CD4-positive, alpha-beta memory T cell (primary cell): ENCODE measurements at regions of chr3 and their contacts with region 1.

Region 1: GRCh38 chr3:179322286-179323196 is at the start of gene ZNF639:
- DNase-seq: peak; percentile 83 to 88 (median 87)
- H3K4me3 ChIP-seq: peak within 1 kb of the TSS; percentile 70 to 83
- H3K4me3 Mint-ChIP-seq: peak within 1 kb of the TSS; percentile 90 to 96 (median 92)
- H3K27ac ChIP-seq: peak within 1 kb of the TSS; percentile 98
- H3K27ac Mint-ChIP-seq: peak within 1 kb of the TSS; percentile 87 to 97 (median 97)
- H3K4me1 ChIP-seq: peaks cover 32% of the 10 kb centered on the region
- H3K4me1 Mint-ChIP-seq: peaks cover 25 to 39% (median 31%) of the 10 kb centered on the region in 4 donors
- H3K27me3 ChIP-seq: no peaks in the 10 kb centered on the region
- H3K27me3 Mint-ChIP-seq: no peaks in the 10 kb centered on the region
- total RNA-seq, gene ZNF639: 43.2 to 45.6 TPM

Region 2: DNA sequence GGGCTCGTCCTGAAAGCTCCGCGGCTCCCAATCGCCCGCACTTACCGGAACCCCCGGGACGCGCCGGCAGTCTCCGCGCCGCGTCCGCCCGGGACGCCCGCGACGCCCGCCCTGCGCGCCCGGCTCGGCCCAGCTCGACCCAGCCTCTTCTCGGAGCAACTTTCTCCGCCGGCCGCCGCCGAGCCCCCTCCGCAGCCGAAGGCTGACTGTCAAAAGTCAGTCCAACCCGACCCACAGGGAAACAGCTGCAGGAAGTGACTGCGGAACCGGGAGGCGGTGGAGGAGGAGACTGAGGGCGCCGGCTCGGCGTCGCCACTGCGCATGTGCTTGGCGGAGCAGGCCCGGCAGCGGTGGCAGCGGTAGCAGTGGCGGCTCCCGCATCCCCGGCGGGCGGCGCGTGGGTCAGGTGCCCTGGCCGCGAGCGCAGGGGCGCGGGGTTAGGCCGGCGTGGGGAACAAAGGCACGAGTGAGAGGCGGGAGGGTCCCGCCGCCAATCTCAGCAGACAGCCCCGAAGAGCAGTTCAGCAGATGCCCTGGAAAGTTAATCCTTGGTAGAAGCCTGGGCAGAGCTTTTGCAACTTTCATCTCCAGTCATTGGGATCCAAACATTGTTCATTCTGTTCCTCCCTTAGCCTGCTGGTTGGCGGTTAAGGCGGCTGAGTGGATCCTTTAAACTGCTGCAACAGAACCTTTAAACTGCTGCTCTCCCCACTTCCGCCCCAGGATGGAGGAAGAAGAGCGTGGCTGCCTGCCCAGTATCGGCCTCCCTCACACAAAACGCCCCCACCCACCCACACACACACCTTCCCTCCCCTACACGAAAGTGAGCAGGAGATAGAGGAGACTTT is 250.8 kb before region 1 on chr3 and contains the start of gene ZMAT3:
- CTCF ChIA-PET with region 1: interaction called, 16 read pairs
- POLR2A ChIA-PET with region 1: interaction called, 20 read pairs
- intact Hi-C with region 1: no loop called
- DNase-seq: peak; percentile 84 to 91 (median 86)
- H3K4me3 ChIP-seq: peak within 1 kb of the TSS; percentile 79 to 81
- H3K4me3 Mint-ChIP-seq: peak within 1 kb of the TSS; percentile 94 to 98 (median 97)
- H3K27ac ChIP-seq: peak within 1 kb of the TSS; percentile 77
- H3K27ac Mint-ChIP-seq: peak within 1 kb of the TSS; percentile 93 to 98 (median 95)
- H3K4me1 ChIP-seq: peaks cover 53% of the 10 kb centered on the region
- H3K4me1 Mint-ChIP-seq: peaks cover 41 to 67% (median 56%) of the 10 kb centered on the region in 4 donors
- H3K27me3 ChIP-seq: no peaks in the 10 kb centered on the region
- H3K27me3 Mint-ChIP-seq: no peaks in the 10 kb centered on the region
- total RNA-seq, gene ZMAT3: 18.5 to 20.0 TPM

Region 3: GRCh38 chr3:179108086-179108485 is 214.5 kb before region 1 on chr3:
- CTCF ChIA-PET with region 1: interaction called, 43 read pairs
- POLR2A ChIA-PET with region 1: no interaction called
- intact Hi-C with region 1: no loop called
- DNase-seq: no peak
- H3K4me3 ChIP-seq: no peak overlapping the region
- H3K4me3 Mint-ChIP-seq: no peak overlapping the region
- H3K27ac ChIP-seq: no peak overlapping the region
- H3K27ac Mint-ChIP-seq: no peak overlapping the region
- H3K4me1 ChIP-seq: no peaks in the 10 kb centered on the region
- H3K4me1 Mint-ChIP-seq: peaks cover 0 to 2% (median 1%) of the 10 kb centered on the region in 4 donors
- H3K27me3 ChIP-seq: peaks cover 4% of the 10 kb centered on the region
- H3K27me3 Mint-ChIP-seq: peaks cover 4 to 7% of the 10 kb centered on the region in 2 donors

Region 4: DNA sequence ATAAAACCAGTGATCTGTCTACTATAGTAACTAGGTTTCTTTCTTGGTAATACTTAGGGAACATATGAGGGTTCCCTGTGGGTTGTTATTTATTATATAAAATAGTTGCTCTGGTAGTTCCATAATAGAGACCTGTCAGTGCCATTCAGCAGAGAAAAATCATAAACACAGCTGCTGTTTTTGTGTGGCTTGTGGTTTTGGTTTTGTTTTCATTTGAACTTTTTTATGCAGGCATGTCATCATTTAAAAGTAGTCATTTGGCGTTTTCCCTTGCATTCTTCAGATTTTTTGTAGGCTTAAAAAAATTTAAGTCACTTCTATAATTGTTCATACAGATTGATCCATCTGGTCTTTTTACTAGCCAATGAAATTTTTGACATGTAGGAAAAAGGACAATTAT is 126.4 kb before region 1 on chr3:
- CTCF ChIA-PET with region 1: interaction called, 3 read pairs
- POLR2A ChIA-PET with region 1: no interaction called
- intact Hi-C with region 1: loop called (anchors 5 kb)
- DNase-seq: peak; percentile 48 to 69 (median 57)
- H3K4me3 ChIP-seq: no peak overlapping the region
- H3K4me3 Mint-ChIP-seq: peak overlapping the region in 5 of 8 donors; percentile 17 to 73 (median 59)
- H3K27ac ChIP-seq: no peak overlapping the region
- H3K27ac Mint-ChIP-seq: peak overlapping the region in 5 of 7 donors; percentile 37 to 70 (median 56)
- H3K4me1 ChIP-seq: peaks cover 29% of the 10 kb centered on the region
- H3K4me1 Mint-ChIP-seq: peaks cover 39 to 62% (median 52%) of the 10 kb centered on the region in 4 donors
- H3K27me3 ChIP-seq: no peaks in the 10 kb centered on the region
- H3K27me3 Mint-ChIP-seq: no peaks in the 10 kb centered on the region

Region 5: GRCh38 chr3:179347345-179348194 is 25.0 kb after region 1 on chr3 and contains the start of gene MFN1:
- CTCF ChIA-PET with region 1: interaction called, 10 read pairs
- POLR2A ChIA-PET with region 1: interaction called, 33 read pairs
- intact Hi-C with region 1: loop called (anchors 1 kb)
- DNase-seq: peak; percentile 86 to 94 (median 89)
- H3K4me3 ChIP-seq: peak within 1 kb of the TSS; percentile 92 to 97
- H3K4me3 Mint-ChIP-seq: peak within 1 kb of the TSS; percentile 93 to 100 (median 98)
- H3K27ac ChIP-seq: peak within 1 kb of the TSS; percentile 72
- H3K27ac Mint-ChIP-seq: peak within 1 kb of the TSS; percentile 86 to 99 (median 95)
- H3K4me1 ChIP-seq: peaks cover 21% of the 10 kb centered on the region
- H3K4me1 Mint-ChIP-seq: peaks cover 16 to 31% (median 24%) of the 10 kb centered on the region in 4 donors
- H3K27me3 ChIP-seq: no peaks in the 10 kb centered on the region
- H3K27me3 Mint-ChIP-seq: no peaks in the 10 kb centered on the region
- total RNA-seq, gene MFN1: 52.0 to 58.3 TPM

Region 6: DNA sequence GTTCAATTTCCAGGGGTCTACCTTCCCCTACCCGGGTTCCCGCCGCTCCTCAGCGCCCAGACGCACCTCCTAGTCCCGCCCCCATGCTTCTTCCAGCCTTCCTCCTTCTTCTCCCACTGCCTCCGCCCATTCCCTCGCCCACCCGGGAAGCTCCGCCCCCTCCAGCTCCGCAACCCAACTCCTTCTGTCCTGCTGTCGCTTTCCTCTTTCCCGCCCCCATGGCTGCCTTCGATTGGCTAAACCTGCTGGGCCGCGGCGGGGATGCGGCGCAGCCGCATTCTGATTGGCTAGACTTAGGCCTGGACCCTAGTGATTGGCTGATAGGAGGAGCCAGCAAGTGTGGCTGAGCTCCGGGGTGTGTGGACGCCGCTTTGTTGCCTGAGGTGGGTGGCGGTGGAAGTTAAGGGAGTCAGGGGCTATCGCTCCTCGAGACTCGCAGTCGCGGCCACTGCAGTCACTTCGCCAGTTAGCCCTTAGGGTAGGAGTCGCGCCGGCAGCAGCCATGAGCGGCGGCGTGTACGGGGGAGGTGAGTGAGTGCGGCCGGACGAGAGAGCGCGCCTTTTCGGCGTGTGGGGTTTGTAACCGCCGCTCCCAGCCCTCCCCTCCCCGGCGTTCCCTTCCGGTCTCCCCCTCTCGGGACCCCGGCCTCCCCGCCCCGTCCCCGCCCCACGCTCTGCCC is 240.2 kb after region 1 on chr3 and contains the start of gene ACTL6A:
- CTCF ChIA-PET with region 1: interaction called, 5 read pairs
- POLR2A ChIA-PET with region 1: interaction called, 6 read pairs
- intact Hi-C with region 1: loop called (anchors 1 kb)
- DNase-seq: peak; percentile 96 to 98 (median 96)
- H3K4me3 ChIP-seq: peak within 1 kb of the TSS; percentile 67 to 76
- H3K4me3 Mint-ChIP-seq: peak within 1 kb of the TSS; percentile 96 to 100 (median 99)
- H3K27ac ChIP-seq: peak within 1 kb of the TSS; percentile 58
- H3K27ac Mint-ChIP-seq: peak within 1 kb of the TSS; percentile 81 to 98 (median 97)
- H3K4me1 ChIP-seq: peaks cover 29% of the 10 kb centered on the region
- H3K4me1 Mint-ChIP-seq: peaks cover 22 to 37% (median 28%) of the 10 kb centered on the region in 4 donors
- H3K27me3 ChIP-seq: no peaks in the 10 kb centered on the region
- H3K27me3 Mint-ChIP-seq: peaks cover 0 to 4% of the 10 kb centered on the region in 2 donors
- total RNA-seq, gene ACTL6A: 56.9 to 62.4 TPM

Region 7: GRCh38 chr3:180601688-180602666 is 1279.4 kb after region 1 on chr3 and contains the start of gene TTC14:
- CTCF ChIA-PET with region 1: no interaction called
- POLR2A ChIA-PET with region 1: no interaction called
- intact Hi-C with region 1: loop called (anchors 5 kb)
- DNase-seq: peak; percentile 92 to 94 (median 93)
- H3K4me3 ChIP-seq: peak within 1 kb of the TSS; percentile 67 to 89
- H3K4me3 Mint-ChIP-seq: peak within 1 kb of the TSS; percentile 90 to 98 (median 96)
- H3K27ac ChIP-seq: peak within 1 kb of the TSS; percentile 89
- H3K27ac Mint-ChIP-seq: peak within 1 kb of the TSS; percentile 95 to 99 (median 97)
- H3K4me1 ChIP-seq: peaks cover 30% of the 10 kb centered on the region
- H3K4me1 Mint-ChIP-seq: peaks cover 19 to 42% (median 26%) of the 10 kb centered on the region in 4 donors
- H3K27me3 ChIP-seq: no peaks in the 10 kb centered on the region
- H3K27me3 Mint-ChIP-seq: peaks cover 5 to 6% of the 10 kb centered on the region in 2 donors
- total RNA-seq, gene TTC14: 168 to 177 TPM